ENCODE measurements at regions of chr12 and their contacts with region 1.

Region 1: GRCh38 chr12:90102957-90103652 is 394.5 kb upstream of the ATP2B1 start:
- DNase-seq: peak in 1 of 2 experiments; percentile 32
- H3K4me3 ChIP-seq: no peak overlapping the region
- H3K4me3 Mint-ChIP-seq: no peak overlapping the region
- H3K27ac Mint-ChIP-seq: no peak overlapping the region
- H3K4me1 ChIP-seq: no peaks in the 10 kb centered on the region
- H3K4me1 Mint-ChIP-seq: peaks cover 20% of the 10 kb centered on the region
- H3K27me3 ChIP-seq: no peaks in the 10 kb centered on the region
- H3K27me3 Mint-ChIP-seq: no peaks in the 10 kb centered on the region
- CTCF ChIP-seq: peak; percentile 28 to 49

Region 2: DNA sequence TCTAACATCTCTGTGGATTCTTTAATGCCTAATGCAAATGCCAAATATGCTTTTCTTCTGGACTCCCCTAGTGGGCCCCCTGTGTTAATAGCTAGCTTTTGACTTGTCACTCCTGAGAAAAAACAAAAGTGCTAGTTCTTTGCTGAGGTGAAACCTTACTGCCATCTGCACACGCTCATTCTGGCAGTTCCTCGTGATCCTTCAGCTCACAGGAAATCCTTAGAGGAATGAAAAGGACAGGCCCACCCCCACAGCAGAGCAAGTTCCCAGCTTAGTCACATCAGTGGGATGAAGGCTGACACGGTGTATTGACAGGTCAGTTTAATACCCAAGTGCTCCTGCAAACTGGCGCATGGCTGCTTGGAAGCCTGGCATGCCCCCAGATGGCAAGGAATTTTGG is 229.4 kb before region 1 on chr12:
- CTCF ChIA-PET with region 1: no interaction called
- POLR2A ChIA-PET with region 1: no interaction called
- intact Hi-C with region 1: no loop called
- DNase-seq: no peak
- H3K4me3 ChIP-seq: no peak overlapping the region
- H3K4me3 Mint-ChIP-seq: no peak overlapping the region
- H3K27ac Mint-ChIP-seq: no peak overlapping the region
- H3K4me1 ChIP-seq: no peaks in the 10 kb centered on the region
- H3K4me1 Mint-ChIP-seq: no peaks in the 10 kb centered on the region
- H3K27me3 ChIP-seq: no peaks in the 10 kb centered on the region
- H3K27me3 Mint-ChIP-seq: no peaks in the 10 kb centered on the region
- CTCF ChIP-seq: no peak

Region 3: DNA sequence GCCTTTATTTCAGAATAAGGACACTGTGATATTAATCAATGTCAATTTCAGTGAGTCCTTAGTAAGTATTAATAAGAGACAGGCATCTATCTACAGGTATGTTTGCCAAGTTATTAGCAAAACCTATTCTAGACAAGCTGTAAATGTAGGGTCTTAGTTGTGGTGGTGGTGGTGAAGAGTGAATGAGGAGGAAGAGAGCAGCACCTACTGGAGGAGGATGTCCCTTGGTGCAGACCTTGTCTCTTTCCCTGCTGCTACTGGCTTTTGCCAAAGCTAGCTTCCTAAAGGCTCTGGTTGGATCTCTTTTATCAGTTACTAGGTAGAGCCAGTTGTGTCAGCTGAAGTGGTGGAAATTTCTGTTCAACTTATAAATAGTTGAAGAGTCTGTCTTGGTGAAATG is 89.7 kb before region 1 on chr12:
- CTCF ChIA-PET with region 1: interaction called, 3 read pairs
- POLR2A ChIA-PET with region 1: no interaction called
- intact Hi-C with region 1: loop called (anchors 1 kb)
- DNase-seq: peak; percentile 23 to 42
- H3K4me3 ChIP-seq: no peak overlapping the region
- H3K4me3 Mint-ChIP-seq: no peak overlapping the region
- H3K27ac Mint-ChIP-seq: no peak overlapping the region
- H3K4me1 ChIP-seq: no peaks in the 10 kb centered on the region
- H3K4me1 Mint-ChIP-seq: no peaks in the 10 kb centered on the region
- H3K27me3 ChIP-seq: no peaks in the 10 kb centered on the region
- H3K27me3 Mint-ChIP-seq: no peaks in the 10 kb centered on the region
- CTCF ChIP-seq: no peak